Panc1 (cell line): ENCODE measurements at regions of chr11 and their contacts with region 1.

Region 1: GRCh38 chr11:58958500-58958899 is 19.2 kb downstream of the GLYATL1 start:
- DNase-seq: no peak
- ATAC-seq: no peak
- H3K4me3 ChIP-seq: no peak overlapping the region
- H3K27ac ChIP-seq: no peak overlapping the region
- H3K4me1 ChIP-seq: no peaks in the 10 kb centered on the region
- H3K27me3 ChIP-seq: no peaks in the 10 kb centered on the region
- CTCF ChIP-seq: peak; percentile 46

Region 2: GRCh38 chr11:59053387-59053786 is 94.9 kb after region 1 on chr11:
- CTCF ChIA-PET with region 1: no interaction called
- POLR2A ChIA-PET with region 1: no interaction called
- in situ Hi-C with region 1: no loop called
- intact Hi-C with region 1: loop called (anchors 10 kb)
- DNase-seq: peak; percentile 10
- ATAC-seq: peak; percentile 75; the same call in 1 of the 2 replicates
- H3K4me3 ChIP-seq: no peak overlapping the region
- H3K27ac ChIP-seq: no peak overlapping the region
- H3K4me1 ChIP-seq: no peaks in the 10 kb centered on the region
- H3K27me3 ChIP-seq: no peaks in the 10 kb centered on the region; the same call in 1 of the 2 replicates
- CTCF ChIP-seq: peak; percentile 84